Kidney (tissue), 22 donors: ENCODE measurements at regions of chr21 and their contacts with region 1.

Region 1: GRCh38 chr21:39518138-39518846 is 66.5 kb downstream of the SH3BGR start:
- DNase-seq: peak; percentile 65 to 78 (median 75)
- H3K4me3 ChIP-seq: no peak overlapping the region
- H3K27ac ChIP-seq: no peak overlapping the region
- H3K4me1 ChIP-seq: no peaks in the 10 kb centered on the region
- H3K27me3 ChIP-seq: no peaks in the 10 kb centered on the region
- CTCF ChIP-seq: peak; percentile 84

Region 2: DNA sequence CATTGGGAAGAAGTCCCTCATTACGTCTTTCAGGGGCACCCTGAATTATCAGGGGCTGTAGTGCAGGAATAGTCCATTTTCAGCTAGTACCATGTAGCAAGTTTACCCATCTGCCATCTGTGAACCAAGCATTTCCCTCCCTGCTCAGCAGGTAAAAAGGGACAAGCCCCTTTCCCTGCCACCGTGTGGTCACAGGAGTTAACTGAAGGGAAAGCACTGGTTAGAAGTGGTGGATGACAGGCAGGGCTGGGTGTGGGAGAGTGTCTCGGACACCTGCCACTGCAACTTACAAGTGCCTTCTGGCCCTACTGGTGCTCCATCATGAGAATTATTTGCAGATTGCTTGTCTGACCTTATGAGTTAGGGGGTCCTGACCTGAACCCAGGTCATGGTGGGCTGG is 194.7 kb after region 1 on chr21:
- intact Hi-C with region 1: loop called (anchors 5 kb)
- DNase-seq: peak in 1 of 5 donors; percentile 41
- H3K4me3 ChIP-seq: no peak overlapping the region
- H3K27ac ChIP-seq: no peak overlapping the region
- H3K4me1 ChIP-seq: no peaks in the 10 kb centered on the region
- H3K27me3 ChIP-seq: no peaks in the 10 kb centered on the region
- CTCF ChIP-seq: no peak